Left lung (tissue), 14 donors: ENCODE measurements at regions of chr7 and their contacts with region 1.

Region 1: GRCh38 chr7:13279854-13280435 is 592.5 kb downstream of the ARL4A start:
- DNase-seq: peak in 2 of 4 donors; percentile 9 to 27
- ATAC-seq: peak; percentile 34
- H3K4me3 ChIP-seq: no peak overlapping the region
- H3K27ac ChIP-seq: no peak overlapping the region
- H3K4me1 ChIP-seq: no peaks in the 10 kb centered on the region
- H3K27me3 ChIP-seq: no peaks in the 10 kb centered on the region
- CTCF ChIP-seq: peak; percentile 15 to 38

Region 2: DNA sequence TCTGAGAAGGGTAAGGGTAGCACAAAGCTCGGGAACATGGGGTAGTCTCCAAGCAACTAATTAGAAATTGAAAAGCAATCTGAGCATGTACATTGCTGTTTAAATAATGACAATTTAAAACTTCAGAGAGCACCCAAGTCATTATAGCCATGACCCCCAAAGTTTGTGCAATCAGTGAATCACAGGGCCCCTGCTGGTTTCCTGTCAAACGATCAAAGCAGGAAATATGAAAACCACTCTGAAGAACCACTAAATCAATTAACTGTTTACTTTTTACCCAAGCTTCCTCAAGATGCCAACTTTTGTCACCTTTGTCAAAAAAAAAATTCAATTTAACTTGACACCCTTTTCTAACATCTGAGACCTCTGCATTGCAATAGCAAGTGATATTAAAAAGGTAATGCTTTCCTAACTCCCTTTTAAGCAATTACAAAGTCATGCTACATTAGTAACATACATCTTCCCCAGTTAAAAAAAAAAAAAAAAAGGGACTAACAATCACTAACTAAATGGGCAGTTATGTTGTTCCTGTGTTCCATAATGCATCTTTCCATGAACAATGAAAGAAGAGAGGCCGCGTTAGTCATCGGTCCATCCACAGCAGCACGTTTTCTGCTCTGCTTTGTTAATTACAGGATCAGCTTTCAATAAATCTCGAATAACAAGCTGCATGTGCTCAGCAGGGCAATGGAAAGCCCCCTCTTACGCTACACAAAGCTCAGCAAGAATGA is 628.9 kb after region 1 on chr7:
- intact Hi-C with region 1: no loop called
- DNase-seq: no peak
- ATAC-seq: no peak
- H3K4me3 ChIP-seq: no peak overlapping the region
- H3K27ac ChIP-seq: no peak overlapping the region
- H3K4me1 ChIP-seq: peaks cover 0 to 5% of the 10 kb centered on the region in 2 donors
- H3K27me3 ChIP-seq: no peaks in the 10 kb centered on the region
- CTCF ChIP-seq: no peak

Region 3: GRCh38 chr7:14457568-14458453 is 1177.9 kb after region 1 on chr7:
- intact Hi-C with region 1: loop called in 1 of 2 experiments (anchors 10 kb)
- DNase-seq: peak; percentile 20 to 89 (median 64)
- ATAC-seq: peak; percentile 98
- H3K4me3 ChIP-seq: no peak overlapping the region
- H3K27ac ChIP-seq: no peak overlapping the region
- H3K4me1 ChIP-seq: no peaks in the 10 kb centered on the region
- H3K27me3 ChIP-seq: no peaks in the 10 kb centered on the region
- CTCF ChIP-seq: peak; percentile 47 to 83

Region 4: DNA sequence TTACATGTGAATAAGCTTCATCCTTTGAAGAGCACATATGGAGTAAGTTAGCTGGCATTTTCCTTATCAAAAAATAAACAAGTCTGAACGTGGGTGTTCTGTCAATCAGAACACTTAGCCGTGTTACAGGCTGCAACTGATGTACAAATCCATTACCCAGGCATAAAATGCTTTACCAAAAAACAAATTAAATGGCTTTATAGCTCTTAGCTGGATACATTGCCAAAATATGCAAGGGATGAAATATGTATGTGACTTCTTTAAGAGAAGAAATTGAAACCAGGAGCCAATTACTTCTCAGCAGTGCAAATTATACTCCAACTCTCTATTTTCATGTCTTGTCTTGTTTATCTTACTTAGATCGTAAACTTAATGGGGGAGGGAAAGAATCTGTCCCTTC is 1407.8 kb after region 1 on chr7:
- intact Hi-C with region 1: loop called in 1 of 2 experiments (anchors 5 kb)
- DNase-seq: no peak
- ATAC-seq: peak; percentile 60
- H3K4me3 ChIP-seq: no peak overlapping the region
- H3K27ac ChIP-seq: no peak overlapping the region
- H3K4me1 ChIP-seq: peaks cover 0 to 4% of the 10 kb centered on the region in 2 donors
- H3K27me3 ChIP-seq: no peaks in the 10 kb centered on the region
- CTCF ChIP-seq: no peak